ENCODE measurements at regions of chr3 and their contacts with region 1.

Region 1: DNA sequence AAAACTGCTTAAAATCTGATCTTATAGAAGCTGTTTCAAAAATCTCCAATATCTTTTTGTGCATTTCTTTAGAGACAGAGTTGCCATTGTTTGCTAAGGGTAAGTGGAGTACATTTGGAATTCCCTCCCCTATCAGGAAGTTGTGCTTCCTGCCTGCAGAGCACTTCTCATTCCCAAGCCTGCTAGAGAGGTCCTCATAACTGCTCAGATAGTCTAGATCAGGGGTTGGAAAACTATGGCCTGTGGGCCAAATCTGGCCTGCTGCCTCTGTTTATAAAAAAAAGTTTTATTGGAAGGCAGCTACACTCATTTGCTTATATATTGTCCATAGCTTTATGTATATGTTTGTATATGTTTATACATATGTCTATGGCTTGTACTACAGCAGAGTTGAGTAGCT is 333.7 kb upstream of the PROK2 start:
- DNase-seq: no peak
- H3K4me3 ChIP-seq: no peak overlapping the region
- H3K27ac ChIP-seq: no peak overlapping the region
- H3K4me1 ChIP-seq: no peaks in the 10 kb centered on the region
- H3K27me3 ChIP-seq: no peaks in the 10 kb centered on the region
- CTCF ChIP-seq: no peak

Region 2: DNA sequence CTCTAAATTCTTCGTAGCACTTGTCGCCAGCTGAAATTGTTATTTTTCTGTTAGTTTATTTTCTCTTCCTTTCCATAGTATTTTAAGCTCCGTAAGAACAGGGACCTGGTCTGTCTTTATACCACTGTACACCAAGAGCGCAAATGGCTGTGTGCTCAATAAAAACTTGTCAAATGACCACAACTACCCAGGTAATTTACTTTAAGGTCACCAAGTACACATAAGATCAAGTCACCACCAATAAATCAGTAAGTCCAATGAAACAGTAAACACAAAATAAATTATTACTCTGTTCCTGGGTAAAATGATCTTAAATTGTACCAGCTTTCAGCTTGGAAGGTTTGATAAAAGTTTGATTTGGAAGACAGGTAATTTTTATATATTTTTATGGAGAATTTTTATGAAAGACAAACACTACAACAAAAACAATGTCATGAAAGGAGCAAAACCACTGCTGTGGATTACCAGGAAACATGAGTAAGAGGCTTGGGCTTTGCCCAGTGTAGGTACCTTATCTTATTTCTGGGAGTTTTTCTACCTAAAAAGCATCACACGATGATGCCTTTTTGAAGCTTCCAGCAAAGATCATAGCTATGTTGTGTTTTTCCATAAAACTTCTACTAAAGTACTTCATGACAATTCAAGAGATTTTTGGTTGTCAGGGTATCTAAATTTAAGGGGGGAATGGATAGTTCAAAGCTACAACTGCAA is 322.8 kb after region 1 on chr3:
- CTCF ChIA-PET with region 1: no interaction called
- POLR2A ChIA-PET with region 1: interaction called, 18 read pairs
- intact Hi-C with region 1: no loop called
- DNase-seq: no peak
- H3K4me3 ChIP-seq: no peak overlapping the region
- H3K27ac ChIP-seq: no peak overlapping the region
- H3K4me1 ChIP-seq: peaks cover 15% of the 10 kb centered on the region
- H3K27me3 ChIP-seq: no peaks in the 10 kb centered on the region
- CTCF ChIP-seq: no peak